ENCODE measurements at regions of chr19 and their contacts with region 1.

Region 1: DNA sequence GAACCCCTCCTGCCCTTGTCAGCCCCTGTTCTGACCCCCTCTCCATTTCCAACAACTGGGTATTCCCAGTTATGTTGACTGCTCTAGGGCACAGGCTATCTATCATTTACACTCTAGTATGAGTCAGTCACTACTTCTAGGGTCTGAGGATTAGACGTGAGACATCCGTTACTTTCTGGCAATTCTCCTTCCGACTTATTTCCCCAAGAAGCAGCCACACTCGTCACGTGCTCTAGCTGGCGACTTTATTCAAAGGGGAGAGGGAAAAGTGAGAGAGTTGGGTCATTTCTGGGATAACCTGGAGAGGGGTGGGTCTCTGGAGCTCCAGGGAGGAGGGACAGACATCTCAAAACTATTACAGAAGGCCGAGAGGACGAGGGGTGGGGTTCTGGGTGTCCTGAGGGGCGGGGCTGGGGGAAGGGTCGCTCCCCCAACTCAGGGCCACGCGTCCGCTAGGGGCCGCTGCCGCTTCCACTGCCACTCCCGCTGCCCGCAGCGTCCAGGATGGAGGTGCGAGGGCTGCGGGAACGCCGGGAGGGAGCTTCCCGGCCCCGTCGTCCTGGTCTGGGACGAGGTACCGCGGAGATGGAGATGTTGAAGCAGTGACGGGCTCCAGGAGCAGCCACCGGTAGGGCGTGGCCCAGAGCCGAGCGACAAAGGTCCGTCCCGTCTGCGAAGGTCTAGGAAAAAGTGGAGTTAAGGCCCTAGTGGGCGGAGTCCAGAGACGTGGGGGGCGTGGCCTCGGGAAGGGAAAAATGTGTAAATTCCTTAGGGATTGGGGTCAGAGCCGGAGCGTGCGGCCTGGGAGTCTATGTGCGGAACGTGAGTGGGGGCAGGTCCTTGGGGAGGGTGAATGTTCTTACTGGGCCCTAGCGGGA is 8.9 kb downstream of the RTBDN start:
- DNase-seq: no peak
- CTCF ChIP-seq: peak; percentile 47

Region 2: GRCh38 chr19:12815088-12815487 is 10.4 kb before region 1 on chr19:
- CTCF ChIA-PET with region 1: interaction called, 14 read pairs
- POLR2A ChIA-PET with region 1: no interaction called
- DNase-seq: no peak
- CTCF ChIP-seq: no peak

Measured in GM10248 (cell line).